ENCODE measurements at regions of chr4 and their contacts with region 1.

Region 1: GRCh38 chr4:184100297-184100885 is 117.3 kb downstream of the ENPP6 start:
- DNase-seq: peak; percentile 26
- ATAC-seq: peak; percentile 75
- H3K4me3 ChIP-seq: no peak overlapping the region
- H3K27ac ChIP-seq: peak overlapping the region; percentile 80; the same call in 1 of the 2 replicates
- H3K4me1 ChIP-seq: peaks cover 14% of the 10 kb centered on the region; the same call in 1 of the 2 replicates
- H3K27me3 ChIP-seq: no peaks in the 10 kb centered on the region; the same call in 1 of the 2 replicates
- CTCF ChIP-seq: peak; percentile 83
- POLR2A ChIP-seq: no peak
- RAD21 ChIP-seq: peak; percentile 88

Region 2: DNA sequence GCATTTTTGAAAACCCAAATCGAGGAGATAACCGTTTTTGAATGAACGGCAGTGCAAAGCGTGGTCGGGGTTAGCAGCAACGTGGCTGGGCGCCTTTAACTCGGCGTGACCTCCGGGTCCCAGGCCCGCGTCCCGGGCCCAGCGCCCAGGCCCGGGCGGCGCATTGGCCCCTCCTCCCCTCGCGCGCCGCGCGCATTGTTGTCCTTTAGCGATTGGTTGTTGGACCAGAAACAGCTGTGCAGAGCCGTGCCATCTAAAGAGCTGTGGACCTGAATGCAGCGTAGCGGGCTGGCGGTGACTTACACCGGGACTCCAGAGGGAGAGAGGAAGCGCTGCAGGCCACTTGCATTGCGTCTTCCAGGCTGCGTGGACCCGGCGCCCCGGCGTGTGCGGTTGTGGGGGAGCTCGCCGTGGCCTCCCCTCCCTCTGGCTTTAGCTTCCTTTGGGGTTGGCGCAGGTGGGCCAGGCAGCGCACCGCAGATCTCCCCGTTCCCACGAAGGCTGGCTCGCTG is 195.3 kb before region 1 on chr4 and contains the start of gene STOX2:
- CTCF ChIA-PET with region 1: interaction called, 7 read pairs
- POLR2A ChIA-PET with region 1: no interaction called
- dilution Hi-C with region 1: no loop called
- in situ Hi-C with region 1: no loop called
- intact Hi-C with region 1: loop called (anchors 1 kb)
- DNase-seq: peak; percentile 55
- ATAC-seq: peak; percentile 79
- H3K4me3 ChIP-seq: peak within 1 kb of the TSS; percentile 60
- H3K27ac ChIP-seq: peak within 1 kb of the TSS; percentile 41
- H3K4me1 ChIP-seq: no peaks in the 10 kb centered on the region
- H3K27me3 ChIP-seq: peaks cover 16% of the 10 kb centered on the region
- CTCF ChIP-seq: no peak
- POLR2A ChIP-seq: no peak
- RAD21 ChIP-seq: no peak
- total RNA-seq, gene STOX2: 4.4 and 5.4 TPM in 2 replicates